ENCODE measurements at regions of chr10 and their contacts with region 1.

Region 1: DNA sequence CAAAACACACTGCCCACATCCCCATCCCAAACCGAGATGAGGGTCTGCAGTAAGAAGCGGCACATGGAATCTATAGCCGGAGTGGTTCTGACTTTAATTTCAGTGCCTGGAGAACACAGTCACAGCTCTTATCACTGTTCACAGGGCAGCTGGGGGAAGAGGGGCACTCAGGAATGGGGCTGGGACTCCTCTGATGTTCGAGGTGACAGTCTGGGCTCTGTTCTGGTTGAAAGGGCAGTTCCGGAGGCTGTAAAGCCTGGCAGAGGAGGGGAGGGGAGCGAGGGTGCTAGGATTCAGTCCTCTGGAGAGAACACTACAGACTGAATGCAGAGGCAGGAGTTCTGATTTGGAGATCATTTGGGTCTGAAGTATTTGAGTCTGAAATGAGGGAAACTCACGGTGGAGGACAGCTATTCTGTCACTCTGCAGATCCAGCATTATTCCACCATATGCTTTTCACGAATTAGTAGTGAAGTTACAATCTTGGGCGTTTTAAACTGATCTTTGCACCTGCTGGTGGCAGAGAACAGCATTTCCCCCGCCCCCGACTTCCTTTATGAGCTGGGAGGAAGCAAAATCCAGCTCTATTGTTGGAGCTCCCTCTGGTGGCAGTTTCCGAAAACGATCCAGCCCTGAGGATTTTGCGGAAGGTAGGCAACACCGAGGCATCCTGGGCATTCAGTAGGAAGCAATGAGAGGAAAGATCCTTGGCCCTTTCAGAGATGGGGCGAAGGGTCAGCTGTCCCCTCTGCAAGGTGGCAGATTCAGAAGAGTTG is 22.7 kb upstream of the KCNK18 start:
- DNase-seq: peak; percentile 95
- H3K4me3 Mint-ChIP-seq: peak overlapping the region; percentile 78
- H3K27ac Mint-ChIP-seq: peak overlapping the region; percentile 16
- H3K4me1 Mint-ChIP-seq: peaks cover 15% of the 10 kb centered on the region
- H3K27me3 Mint-ChIP-seq: peaks cover 25% of the 10 kb centered on the region

Region 2: DNA sequence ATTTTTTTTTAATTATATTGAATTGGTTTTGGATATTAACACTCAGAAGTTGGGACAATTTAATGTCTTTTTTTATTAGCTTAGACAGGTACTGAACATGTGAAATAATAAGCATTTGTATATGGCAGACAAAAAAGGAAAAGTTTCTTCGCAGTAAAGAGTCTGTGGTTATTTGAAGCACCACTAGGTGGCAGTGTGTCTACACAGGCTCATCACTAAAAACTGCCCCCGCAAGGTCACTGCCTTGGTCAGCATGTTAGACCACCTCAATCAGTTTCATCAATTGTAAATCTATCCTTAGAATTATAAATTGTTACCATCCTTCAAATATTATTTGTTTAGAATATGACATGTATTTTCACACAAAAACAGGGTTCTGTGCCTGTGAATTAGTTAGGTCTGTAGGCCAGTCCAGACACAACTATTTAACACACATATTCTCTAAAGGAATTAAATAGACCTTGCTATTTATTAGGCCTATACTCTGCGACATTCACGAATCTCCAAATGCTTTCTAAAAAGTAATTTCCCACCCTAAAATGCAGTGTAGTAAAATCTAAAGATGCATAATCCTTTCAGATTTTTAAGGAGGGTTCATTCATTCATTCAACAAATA is 730.0 kb before region 1 on chr10:
- CTCF ChIA-PET with region 1: no interaction called
- intact Hi-C with region 1: loop called (anchors 5 kb)
- DNase-seq: no peak
- H3K4me3 Mint-ChIP-seq: no peak overlapping the region
- H3K27ac Mint-ChIP-seq: no peak overlapping the region
- H3K4me1 Mint-ChIP-seq: no peaks in the 10 kb centered on the region
- H3K27me3 Mint-ChIP-seq: peaks cover 11% of the 10 kb centered on the region

Region 3: GRCh38 chr10:116742367-116743265 is 432.0 kb before region 1 on chr10 and contains the start of gene HSPA12A:
- CTCF ChIA-PET with region 1: no interaction called
- intact Hi-C with region 1: loop called (anchors 5 kb)
- DNase-seq: peak; percentile 50
- H3K4me3 Mint-ChIP-seq: peak within 1 kb of the TSS; percentile 43
- H3K27ac Mint-ChIP-seq: no peak within 1 kb of the TSS
- H3K4me1 Mint-ChIP-seq: peaks cover 1% of the 10 kb centered on the region
- H3K27me3 Mint-ChIP-seq: peaks cover 72% of the 10 kb centered on the region
- total RNA-seq, gene HSPA12A: 0.05 TPM in 1 of 2 experiments, not detected in the other

Region 4: GRCh38 chr10:116849248-116850057 is 325.2 kb before region 1 on chr10 and contains the start of gene ENO4:
- CTCF ChIA-PET with region 1: no interaction called
- intact Hi-C with region 1: loop called (anchors 2 kb)
- DNase-seq: peak; percentile 21
- H3K4me3 Mint-ChIP-seq: peak within 1 kb of the TSS; percentile 23
- H3K27ac Mint-ChIP-seq: no peak within 1 kb of the TSS
- H3K4me1 Mint-ChIP-seq: peaks cover 13% of the 10 kb centered on the region
- H3K27me3 Mint-ChIP-seq: peaks cover 58% of the 10 kb centered on the region
- total RNA-seq, gene ENO4: not detected

Region 5: GRCh38 chr10:117053482-117053881 is 121.1 kb before region 1 on chr10:
- CTCF ChIA-PET with region 1: no interaction called
- intact Hi-C with region 1: no loop called
- DNase-seq: no peak
- H3K4me3 Mint-ChIP-seq: no peak overlapping the region
- H3K27ac Mint-ChIP-seq: no peak overlapping the region
- H3K4me1 Mint-ChIP-seq: no peaks in the 10 kb centered on the region
- H3K27me3 Mint-ChIP-seq: peaks cover 14% of the 10 kb centered on the region

Region 6: DNA sequence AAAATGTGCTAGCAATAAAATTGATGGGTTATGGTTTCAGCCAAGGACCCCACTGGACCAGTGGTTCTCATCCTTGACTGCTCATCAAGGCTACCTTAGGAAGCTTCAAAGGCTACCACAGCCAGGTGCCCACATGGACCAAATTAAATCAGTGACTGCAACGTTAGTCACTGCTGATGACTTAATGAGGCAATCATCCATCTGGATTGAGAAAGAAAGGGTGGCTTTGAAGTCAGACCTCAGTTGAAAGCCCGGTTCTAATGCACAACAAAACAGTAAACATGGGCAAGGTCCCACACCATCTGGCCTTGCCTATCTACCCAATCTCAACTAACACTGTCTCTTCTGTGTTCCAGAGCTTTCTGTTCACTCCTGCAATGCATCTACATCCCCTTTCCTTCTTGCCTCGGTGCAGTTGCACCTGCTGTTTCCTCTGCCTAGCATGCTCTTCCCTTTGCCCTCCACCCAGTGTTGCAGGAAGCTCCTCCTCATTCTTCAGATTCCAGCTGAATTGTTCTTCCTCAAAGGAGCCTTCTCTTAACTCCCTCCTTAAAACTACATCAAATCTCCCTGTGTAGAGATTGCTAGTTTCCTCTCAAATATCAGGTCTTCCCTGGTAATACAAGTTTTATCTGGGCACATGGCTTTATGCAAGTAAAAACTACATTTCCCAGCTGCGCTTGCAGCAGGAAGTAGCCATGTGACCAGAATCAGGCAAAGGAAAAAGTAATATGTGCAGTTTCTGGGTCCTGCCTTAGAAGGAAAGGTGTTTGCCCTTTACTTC is 12.4 kb after region 1 on chr10:
- CTCF ChIA-PET with region 1: interaction called, 25 read pairs
- intact Hi-C with region 1: no loop called
- DNase-seq: no peak
- H3K4me3 Mint-ChIP-seq: no peak overlapping the region
- H3K27ac Mint-ChIP-seq: no peak overlapping the region
- H3K4me1 Mint-ChIP-seq: no peaks in the 10 kb centered on the region
- H3K27me3 Mint-ChIP-seq: peaks cover 6% of the 10 kb centered on the region